Activated T-helper 1 cell treated with anti-CD3 and anti-CD28 coated beads, Interleukin-12 subunit alpha, Interleukin-12 subunit beta, Interleukin-2, Interleukin-4 antibody, amounts not matched to agents 30 ng/mL and 10 ng/mL and 1 ng/mL, durations not matched to agents 14 hours and 24 hours and 36 hours (primary cell): ENCODE measurements at regions of chr19 and their contacts with region 1.

Region 1: DNA sequence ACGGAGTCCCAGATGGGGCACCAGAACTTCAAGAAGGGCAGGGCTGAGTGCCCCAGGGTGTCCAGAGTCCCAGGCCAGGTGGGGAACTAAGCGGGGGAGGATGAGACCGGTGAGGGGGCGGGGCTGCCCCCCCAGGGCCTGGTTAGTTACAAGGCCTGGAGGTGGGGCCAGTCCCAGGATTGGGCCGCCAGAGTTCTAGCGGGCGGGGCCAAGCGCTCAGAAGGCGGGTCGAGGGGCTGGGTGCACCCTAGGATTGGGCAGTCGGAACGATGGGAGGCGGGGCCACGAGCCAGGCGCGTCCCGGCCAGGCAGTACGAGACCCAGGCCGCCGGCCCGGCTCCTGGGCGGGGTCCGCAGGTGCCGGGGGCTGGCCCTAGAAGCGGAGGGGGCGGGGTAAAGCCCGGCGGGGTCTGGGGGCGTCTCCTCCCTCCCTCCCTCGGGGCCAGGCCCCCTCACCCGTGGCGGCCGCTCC is 571 bp downstream of the ZNF653 start:
- DNase-seq: peak; percentile 97
- H3K4me3 Mint-ChIP-seq: peak overlapping the region; percentile 91
- H3K27ac Mint-ChIP-seq: peak overlapping the region; percentile 84
- H3K4me1 Mint-ChIP-seq: peaks cover 13% of the 10 kb centered on the region
- H3K27me3 Mint-ChIP-seq: no peaks in the 10 kb centered on the region

Region 2: GRCh38 chr19:11155373-11156120 is 349.5 kb before region 1 on chr19 and contains the start of gene SPC24:
- intact Hi-C with region 1: loop called (anchors 1 kb)
- DNase-seq: peak; percentile 94
- H3K4me3 Mint-ChIP-seq: peak within 1 kb of the TSS; percentile 84
- H3K27ac Mint-ChIP-seq: peak within 1 kb of the TSS; percentile 89
- H3K4me1 Mint-ChIP-seq: peaks cover 7% of the 10 kb centered on the region
- H3K27me3 Mint-ChIP-seq: no peaks in the 10 kb centered on the region
- total RNA-seq, gene SPC24: 30.3 and 30.4 TPM in 2 replicates

Region 3: DNA sequence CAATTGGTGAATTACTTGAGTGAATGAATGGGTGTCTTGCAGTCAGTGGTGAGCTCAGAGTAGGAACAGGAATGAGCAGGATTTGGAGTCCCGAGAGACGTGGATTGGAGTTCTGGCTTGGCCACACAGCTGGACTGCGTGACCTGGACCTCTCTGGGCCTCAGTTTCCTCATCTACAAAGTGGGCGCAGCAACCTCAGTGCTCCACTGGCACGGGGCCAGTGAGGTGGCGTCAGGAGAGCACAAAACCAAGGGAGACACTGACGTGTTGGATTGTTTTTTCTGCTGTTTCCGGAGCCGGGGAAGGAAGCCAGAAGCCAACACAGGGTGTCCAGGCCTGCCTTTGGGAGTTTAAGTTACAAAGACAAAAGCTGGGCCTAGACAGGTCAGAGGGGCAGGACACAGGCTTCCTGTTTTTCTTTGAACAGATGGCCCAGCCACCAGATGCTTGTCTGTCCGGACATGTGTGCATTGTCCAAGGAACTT is 236.2 kb before region 1 on chr19:
- intact Hi-C with region 1: no loop called
- DNase-seq: no peak
- H3K4me3 Mint-ChIP-seq: no peak overlapping the region
- H3K27ac Mint-ChIP-seq: no peak overlapping the region
- H3K4me1 Mint-ChIP-seq: no peaks in the 10 kb centered on the region
- H3K27me3 Mint-ChIP-seq: peaks cover 51% of the 10 kb centered on the region

Region 4: DNA sequence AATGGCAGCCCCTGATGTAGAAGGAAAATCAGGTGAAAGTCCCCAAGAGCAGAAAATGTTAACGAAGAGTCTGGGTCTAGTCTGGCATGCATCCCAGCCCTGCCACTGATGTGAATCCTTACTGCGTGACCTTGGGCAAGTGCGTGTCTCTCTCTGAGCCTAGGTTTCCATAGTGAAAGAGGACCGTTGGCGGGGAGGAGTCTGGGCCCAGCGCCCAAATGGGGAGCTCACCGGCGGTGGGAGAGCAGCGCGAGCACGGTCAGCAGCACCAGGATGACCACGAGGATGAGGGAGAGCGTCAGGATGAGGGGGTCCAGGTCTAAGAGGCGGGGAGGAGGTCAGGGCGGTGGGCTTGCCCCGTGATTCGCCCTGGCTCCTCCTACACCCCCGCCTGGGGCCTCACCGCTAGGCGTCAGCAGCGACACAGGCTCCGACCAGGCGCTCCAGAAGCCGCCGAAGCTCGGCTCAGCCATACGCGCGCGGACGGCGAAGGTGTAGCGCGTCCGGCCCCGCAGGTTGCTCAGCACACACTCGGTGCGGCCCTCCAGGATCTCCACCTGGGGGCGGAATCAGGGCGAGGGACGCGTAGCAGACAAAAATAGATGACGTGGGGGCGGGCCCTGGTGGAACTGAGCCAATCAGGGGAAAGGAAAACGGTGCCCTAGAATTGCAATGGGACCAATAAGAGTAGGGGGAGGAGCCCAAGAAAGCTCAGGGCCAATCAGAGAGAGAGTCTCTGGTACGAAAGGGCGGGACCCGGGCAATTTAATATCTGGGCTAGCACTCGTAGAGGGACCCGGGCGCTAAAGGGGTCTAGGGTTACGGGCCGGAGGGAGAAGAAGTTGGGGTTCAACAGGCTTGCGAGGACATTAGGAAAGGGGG is 124.2 kb before region 1 on chr19:
- intact Hi-C with region 1: loop called (anchors 1 kb)
- DNase-seq: peak; percentile 96
- H3K4me3 Mint-ChIP-seq: peak overlapping the region; percentile 88
- H3K27ac Mint-ChIP-seq: peak overlapping the region; percentile 100
- H3K4me1 Mint-ChIP-seq: peaks cover 32% of the 10 kb centered on the region
- H3K27me3 Mint-ChIP-seq: peaks cover 16% of the 10 kb centered on the region

Region 5: GRCh38 chr19:11494634-11495285 is 10.3 kb before region 1 on chr19:
- intact Hi-C with region 1: no loop called
- DNase-seq: no peak
- H3K4me3 Mint-ChIP-seq: no peak overlapping the region
- H3K27ac Mint-ChIP-seq: no peak overlapping the region
- H3K4me1 Mint-ChIP-seq: no peaks in the 10 kb centered on the region
- H3K27me3 Mint-ChIP-seq: no peaks in the 10 kb centered on the region

Region 6: GRCh38 chr19:11528551-11529341 is 23.7 kb after region 1 on chr19 and contains the start of gene ECSIT:
- intact Hi-C with region 1: loop called (anchors 1 kb)
- DNase-seq: peak; percentile 89
- H3K4me3 Mint-ChIP-seq: peak within 1 kb of the TSS; percentile 95
- H3K27ac Mint-ChIP-seq: peak within 1 kb of the TSS; percentile 92
- H3K4me1 Mint-ChIP-seq: peaks cover 28% of the 10 kb centered on the region
- H3K27me3 Mint-ChIP-seq: no peaks in the 10 kb centered on the region
- total RNA-seq, gene ECSIT: 37.3 and 38.8 TPM in 2 replicates

Region 7: GRCh38 chr19:11581740-11582139 is 76.7 kb after region 1 on chr19:
- intact Hi-C with region 1: loop called (anchors 2 kb)
- DNase-seq: peak; percentile 24
- H3K4me3 Mint-ChIP-seq: peak overlapping the region; percentile 75
- H3K27ac Mint-ChIP-seq: peak overlapping the region; percentile 87
- H3K4me1 Mint-ChIP-seq: peaks cover 21% of the 10 kb centered on the region
- H3K27me3 Mint-ChIP-seq: no peaks in the 10 kb centered on the region

Region 8: DNA sequence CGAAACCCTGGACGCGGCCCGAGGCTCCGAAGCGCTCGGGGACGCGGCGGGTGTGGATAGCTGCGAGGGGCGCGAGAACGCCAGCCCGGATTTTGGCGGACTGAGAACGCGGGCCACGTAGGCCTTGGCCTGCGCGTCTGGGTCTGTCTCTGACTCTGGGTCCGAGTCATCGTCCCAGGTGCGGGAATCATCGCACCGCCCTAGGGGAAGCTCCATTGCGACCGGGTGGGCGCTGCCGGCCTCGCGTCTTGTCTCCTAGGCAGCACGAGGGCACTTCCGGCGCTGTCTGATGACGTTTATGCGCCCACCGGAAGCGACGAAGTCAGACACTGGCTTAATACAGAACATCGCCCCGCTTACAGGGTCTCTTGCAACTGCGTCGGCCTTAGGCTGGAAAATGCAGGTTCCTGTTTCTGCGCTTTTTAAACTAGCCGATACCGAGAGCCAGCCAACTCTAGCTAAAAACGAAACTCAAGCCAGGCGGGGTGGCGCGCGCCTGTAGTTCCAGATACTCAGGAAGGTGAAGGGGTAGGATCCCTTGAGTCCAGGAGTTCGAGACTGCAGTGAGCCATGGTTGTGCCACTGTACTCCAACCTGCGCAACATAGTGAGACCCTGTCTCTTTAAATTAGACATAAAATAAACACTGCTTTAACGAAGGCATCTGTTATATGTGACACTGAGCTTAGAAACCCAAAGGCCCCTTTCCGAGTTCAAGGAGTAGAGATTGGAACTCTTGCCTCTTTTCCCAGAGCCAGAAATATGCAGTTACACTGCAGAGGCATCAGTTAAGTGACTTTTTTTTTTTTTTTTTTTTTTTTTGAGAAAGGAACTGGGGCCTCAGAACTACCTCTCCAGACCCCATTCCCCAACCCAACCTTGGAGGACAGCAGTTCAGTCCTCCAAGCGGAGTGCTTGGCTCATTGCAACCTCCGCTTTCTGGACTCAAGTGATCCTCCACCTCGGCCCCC is 1191.6 kb after region 1 on chr19 and contains the start of gene FBXW9:
- intact Hi-C with region 1: loop called (anchors 1 kb)
- DNase-seq: peak; percentile 94
- H3K4me3 Mint-ChIP-seq: peak within 1 kb of the TSS; percentile 89
- H3K27ac Mint-ChIP-seq: peak within 1 kb of the TSS; percentile 93
- H3K4me1 Mint-ChIP-seq: peaks cover 11% of the 10 kb centered on the region
- H3K27me3 Mint-ChIP-seq: no peaks in the 10 kb centered on the region
- total RNA-seq, gene FBXW9: 11.8 and 12.2 TPM in 2 replicates